OCI-LY7 (cell line): ENCODE measurements at regions of chr20 and their contacts with region 1.

Region 1: DNA sequence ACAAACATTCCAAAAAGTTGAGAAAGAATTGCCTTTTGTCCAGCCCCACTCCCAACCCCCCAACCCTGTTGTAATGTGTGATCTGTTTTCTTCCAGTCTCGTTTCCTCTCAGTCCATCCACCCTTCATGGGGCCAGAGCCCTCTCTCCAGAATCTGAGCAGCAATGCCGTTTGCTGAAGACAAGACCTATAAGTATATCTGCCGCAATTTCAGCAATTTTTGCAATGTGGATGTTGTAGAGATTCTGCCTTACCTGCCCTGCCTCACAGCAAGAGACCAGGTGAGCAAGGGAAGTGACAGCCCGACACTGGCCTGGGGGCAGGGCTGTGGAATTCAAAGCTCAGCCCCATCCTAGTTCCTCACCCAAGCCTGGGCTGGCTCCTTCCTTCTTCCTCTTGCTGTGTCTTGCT is 7.8 kb downstream of the MAVS start:
- DNase-seq: no peak
- H3K4me3 ChIP-seq: no peak overlapping the region
- H3K27ac ChIP-seq: no peak overlapping the region
- H3K4me1 ChIP-seq: no peaks in the 10 kb centered on the region
- CTCF ChIP-seq: no peak

Region 2: GRCh38 chr20:3679749-3680700 is 174.4 kb before region 1 on chr20:
- CTCF ChIA-PET with region 1: no interaction called
- POLR2A ChIA-PET with region 1: no interaction called
- intact Hi-C with region 1: loop called (anchors 5 kb)
- DNase-seq: no peak
- H3K4me3 ChIP-seq: no peak overlapping the region
- H3K27ac ChIP-seq: no peak overlapping the region
- H3K4me1 ChIP-seq: no peaks in the 10 kb centered on the region
- CTCF ChIP-seq: no peak

Region 3: DNA sequence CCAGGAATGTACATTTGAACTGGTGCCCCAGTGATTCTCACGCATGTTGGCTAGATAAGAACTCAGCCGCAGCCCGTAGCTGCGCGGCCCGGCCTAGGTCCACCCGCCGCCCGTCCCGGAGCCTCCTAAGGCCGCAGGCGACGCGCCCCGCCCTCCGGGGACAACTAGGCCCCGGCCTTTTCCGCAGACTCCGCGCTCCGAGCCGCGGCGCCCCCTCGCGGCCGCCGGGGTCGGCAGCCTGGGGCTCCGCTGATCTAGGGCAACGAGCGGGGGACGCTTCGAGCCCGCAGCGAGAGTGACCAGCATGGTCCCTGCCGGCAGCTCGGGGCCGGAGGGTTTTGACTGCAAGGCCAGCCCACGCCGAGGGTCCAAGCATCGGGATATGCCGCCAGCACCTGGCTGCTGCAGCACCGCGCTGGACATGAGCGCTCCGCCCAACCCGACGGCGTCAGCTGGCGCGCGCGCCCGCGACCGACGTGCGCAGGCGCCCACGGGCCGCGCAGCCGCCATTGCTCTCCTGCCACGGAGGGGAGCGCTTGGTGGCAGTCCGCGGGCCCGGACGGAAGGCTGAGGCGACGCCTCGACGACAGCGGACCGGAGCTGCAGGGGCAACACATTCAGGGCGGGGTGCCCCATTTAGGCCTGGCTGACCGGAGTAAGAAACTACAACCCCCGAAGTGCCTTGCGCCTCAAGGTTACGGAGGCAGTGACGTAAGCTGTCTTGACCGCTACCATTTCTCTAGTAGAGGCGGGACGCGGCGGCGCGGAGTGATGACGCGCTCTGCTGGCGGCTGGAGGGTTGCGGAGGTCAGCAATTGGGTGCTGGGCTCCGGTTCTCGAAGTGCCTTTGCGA is 34.2 kb before region 1 on chr20 and contains the start of gene AP5S1:
- CTCF ChIA-PET with region 1: no interaction called
- POLR2A ChIA-PET with region 1: no interaction called
- intact Hi-C with region 1: no loop called
- DNase-seq: peak; percentile 97
- H3K4me3 ChIP-seq: peak within 1 kb of the TSS; percentile 91
- H3K27ac ChIP-seq: peak within 1 kb of the TSS; percentile 70
- H3K4me1 ChIP-seq: peaks cover 37% of the 10 kb centered on the region
- CTCF ChIP-seq: peak; percentile 98
- total RNA-seq, gene AP5S1: 6.2 and 9.8 TPM in 2 replicates